ENCODE measurements at regions of chr1 and their contacts with region 1.

Region 1: GRCh38 chr1:225772323-225772768 is 5.3 kb upstream of the SRP9 start:
- DNase-seq: peak; percentile 79
- H3K4me3 ChIP-seq: peak overlapping the region in 1 of 2 experiments; percentile 39; a peak in 1 of 4 replicates
- H3K27ac ChIP-seq: peak overlapping the region; percentile 56 to 78
- H3K4me1 ChIP-seq: peaks cover 24 to 48% of the 10 kb centered on the region in 2 experiments
- H3K27me3 ChIP-seq: no peaks in the 10 kb centered on the region
- CTCF ChIP-seq: peak; percentile 95
- EP300 ChIP-seq: no peak
- RAD21 ChIP-seq: peak; percentile 99

Region 2: DNA sequence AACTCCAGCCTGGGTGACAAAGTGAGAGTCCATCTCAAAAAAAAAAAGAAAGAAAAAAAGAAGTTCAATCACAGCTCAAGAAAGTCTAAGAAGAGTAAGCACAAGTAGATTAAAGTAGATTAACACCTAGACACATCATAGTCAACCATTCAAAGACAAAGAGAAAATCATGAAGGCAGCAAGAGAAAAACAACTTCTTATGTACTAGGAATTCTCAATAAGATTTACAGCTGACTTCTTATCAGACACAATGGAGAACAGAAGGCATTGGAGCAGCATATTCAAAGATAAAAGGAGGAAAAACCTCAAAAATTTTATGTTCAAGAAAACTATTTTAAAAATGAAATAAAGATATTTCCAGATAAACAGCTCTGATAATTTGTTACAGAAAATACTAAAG is 491.8 kb before region 1 on chr1:
- CTCF ChIA-PET with region 1: no interaction called
- POLR2A ChIA-PET with region 1: no interaction called
- DNase-seq: no peak
- H3K4me3 ChIP-seq: no peak overlapping the region
- H3K27ac ChIP-seq: no peak overlapping the region
- H3K4me1 ChIP-seq: no peaks in the 10 kb centered on the region
- H3K27me3 ChIP-seq: no peaks in the 10 kb centered on the region
- CTCF ChIP-seq: no peak
- EP300 ChIP-seq: no peak
- RAD21 ChIP-seq: no peak

Region 3: GRCh38 chr1:225467193-225468020 is 304.9 kb before region 1 on chr1:
- CTCF ChIA-PET with region 1: interaction called, 473 read pairs
- POLR2A ChIA-PET with region 1: interaction called, 3 read pairs
- DNase-seq: no peak
- H3K4me3 ChIP-seq: no peak overlapping the region
- H3K27ac ChIP-seq: no peak overlapping the region
- H3K4me1 ChIP-seq: peaks cover 0 to 12% of the 10 kb centered on the region in 2 experiments; a peak in 3 of 4 replicates
- H3K27me3 ChIP-seq: no peaks in the 10 kb centered on the region
- CTCF ChIP-seq: no peak
- EP300 ChIP-seq: no peak
- RAD21 ChIP-seq: no peak

Region 4: GRCh38 chr1:225534135-225534534 is 238.2 kb before region 1 on chr1:
- CTCF ChIA-PET with region 1: interaction called, 11 read pairs
- POLR2A ChIA-PET with region 1: no interaction called
- DNase-seq: no peak
- H3K4me3 ChIP-seq: no peak overlapping the region
- H3K27ac ChIP-seq: no peak overlapping the region
- H3K4me1 ChIP-seq: peaks cover 27 to 58% of the 10 kb centered on the region in 2 experiments; a peak in 3 of 4 replicates
- H3K27me3 ChIP-seq: no peaks in the 10 kb centered on the region
- CTCF ChIP-seq: no peak
- EP300 ChIP-seq: no peak
- RAD21 ChIP-seq: no peak

Region 5: DNA sequence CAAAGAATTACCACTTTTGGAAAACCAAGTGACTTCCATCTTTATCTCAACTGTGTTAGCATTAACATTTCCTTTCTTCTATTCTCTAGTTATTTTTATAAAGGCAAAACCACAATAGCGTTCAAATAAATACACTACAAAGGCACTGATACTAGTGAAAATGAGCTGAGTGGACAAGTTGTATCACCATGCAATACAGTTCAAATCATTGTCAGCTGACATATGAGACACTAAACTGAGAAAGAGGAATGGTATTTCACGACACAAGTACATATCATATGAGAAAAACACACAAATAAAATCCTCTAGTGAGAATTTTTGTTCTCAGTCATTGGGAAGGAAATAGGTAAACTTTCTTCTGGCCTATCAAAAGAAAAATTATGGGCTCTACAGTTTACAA is 145.6 kb before region 1 on chr1:
- CTCF ChIA-PET with region 1: interaction called, 10 read pairs
- POLR2A ChIA-PET with region 1: interaction called, 3 read pairs
- DNase-seq: no peak
- H3K4me3 ChIP-seq: no peak overlapping the region
- H3K27ac ChIP-seq: 0 out of 4 replicates have a peak overlapping the region, but pooled peaks of 1 of the 2 experiments have one; percentile 1
- H3K4me1 ChIP-seq: peaks cover 7 to 29% of the 10 kb centered on the region in 2 experiments
- H3K27me3 ChIP-seq: no peaks in the 10 kb centered on the region
- CTCF ChIP-seq: no peak
- EP300 ChIP-seq: no peak
- RAD21 ChIP-seq: no peak

Region 6: GRCh38 chr1:225735252-225736149 is 36.8 kb before region 1 on chr1:
- CTCF ChIA-PET with region 1: interaction called, 13 read pairs
- POLR2A ChIA-PET with region 1: no interaction called
- DNase-seq: peak; percentile 53
- H3K4me3 ChIP-seq: no peak overlapping the region
- H3K27ac ChIP-seq: peak overlapping the region; percentile 88 to 93
- H3K4me1 ChIP-seq: peaks cover 29% of the 10 kb centered on the region in 2 experiments
- H3K27me3 ChIP-seq: no peaks in the 10 kb centered on the region
- CTCF ChIP-seq: peak; percentile 31; the same call in 1 of the 2 replicates
- EP300 ChIP-seq: 0 out of 4 replicates have a peak, but pooled peaks have one; percentile 3 to 24
- RAD21 ChIP-seq: no peak; the same call in 1 of the 2 replicates

Region 7: DNA sequence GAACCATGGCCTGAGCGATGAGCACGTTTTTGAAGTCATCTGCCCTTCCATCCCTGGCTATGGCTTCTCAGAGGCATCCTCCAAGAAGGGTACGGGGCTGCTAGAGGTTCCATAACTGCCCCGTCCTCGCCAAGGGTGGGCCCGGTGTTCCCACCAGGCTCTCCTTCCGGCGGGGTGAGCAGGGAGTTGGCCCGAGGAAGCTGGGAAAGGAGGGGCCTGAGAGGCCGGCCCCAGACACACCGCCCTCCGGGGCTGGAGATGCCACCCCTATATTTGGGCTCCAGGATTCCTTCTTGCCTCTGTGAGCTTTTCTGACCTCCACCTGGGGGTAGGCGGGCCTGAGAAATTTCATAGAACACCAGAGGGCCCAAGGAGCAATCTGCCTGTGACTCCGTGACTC is 66.4 kb after region 1 on chr1:
- CTCF ChIA-PET with region 1: no interaction called
- POLR2A ChIA-PET with region 1: no interaction called
- DNase-seq: no peak
- H3K4me3 ChIP-seq: no peak overlapping the region
- H3K27ac ChIP-seq: no peak overlapping the region
- H3K4me1 ChIP-seq: no peaks in the 10 kb centered on the region; a peak in 1 of 4 replicates
- H3K27me3 ChIP-seq: no peaks in the 10 kb centered on the region
- CTCF ChIP-seq: no peak
- EP300 ChIP-seq: no peak
- RAD21 ChIP-seq: no peak

Region 8: DNA sequence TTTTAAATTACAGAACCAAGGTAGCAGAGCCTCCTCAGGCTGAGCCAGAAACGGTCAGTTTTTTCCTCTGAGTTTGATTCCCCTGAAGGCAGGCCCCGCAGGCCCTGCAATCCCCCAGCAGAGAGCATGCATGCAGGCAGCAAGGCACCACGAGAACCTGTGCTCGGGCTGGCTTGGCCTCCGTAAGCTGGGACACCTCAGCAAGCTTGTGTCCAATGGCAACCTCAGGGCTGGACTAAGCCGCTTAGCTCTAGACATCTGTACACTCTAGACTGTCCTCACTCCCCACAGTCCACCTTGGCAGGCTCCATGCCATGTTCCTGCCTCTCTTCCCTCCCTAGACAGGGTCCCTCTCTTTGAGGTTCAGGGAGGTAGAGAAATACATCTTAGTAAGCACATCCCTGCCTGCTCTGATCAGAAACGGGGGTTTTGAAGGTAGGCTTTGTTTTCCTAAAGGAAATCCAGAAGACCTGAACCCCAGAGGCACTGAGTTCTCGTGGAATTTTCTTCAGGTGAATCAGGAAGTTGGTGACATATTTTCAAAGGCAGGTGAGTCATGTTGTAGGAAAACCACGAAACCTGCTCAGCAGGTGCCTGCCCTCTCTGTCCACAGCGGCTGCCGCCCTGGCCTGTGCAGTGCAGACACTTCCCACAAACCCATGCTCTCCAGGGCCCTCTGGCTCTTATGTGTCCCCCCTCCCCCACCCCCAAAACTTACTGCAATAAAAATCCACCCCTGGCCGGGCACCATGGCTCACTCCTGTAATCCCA is 102.9 kb after region 1 on chr1:
- CTCF ChIA-PET with region 1: no interaction called
- POLR2A ChIA-PET with region 1: no interaction called
- DNase-seq: no peak
- H3K4me3 ChIP-seq: no peak overlapping the region
- H3K27ac ChIP-seq: no peak overlapping the region
- H3K4me1 ChIP-seq: peaks cover 0 to 19% of the 10 kb centered on the region in 2 experiments; a peak in 1 of 4 replicates
- H3K27me3 ChIP-seq: no peaks in the 10 kb centered on the region
- CTCF ChIP-seq: no peak
- EP300 ChIP-seq: no peak
- RAD21 ChIP-seq: no peak

Region 9: DNA sequence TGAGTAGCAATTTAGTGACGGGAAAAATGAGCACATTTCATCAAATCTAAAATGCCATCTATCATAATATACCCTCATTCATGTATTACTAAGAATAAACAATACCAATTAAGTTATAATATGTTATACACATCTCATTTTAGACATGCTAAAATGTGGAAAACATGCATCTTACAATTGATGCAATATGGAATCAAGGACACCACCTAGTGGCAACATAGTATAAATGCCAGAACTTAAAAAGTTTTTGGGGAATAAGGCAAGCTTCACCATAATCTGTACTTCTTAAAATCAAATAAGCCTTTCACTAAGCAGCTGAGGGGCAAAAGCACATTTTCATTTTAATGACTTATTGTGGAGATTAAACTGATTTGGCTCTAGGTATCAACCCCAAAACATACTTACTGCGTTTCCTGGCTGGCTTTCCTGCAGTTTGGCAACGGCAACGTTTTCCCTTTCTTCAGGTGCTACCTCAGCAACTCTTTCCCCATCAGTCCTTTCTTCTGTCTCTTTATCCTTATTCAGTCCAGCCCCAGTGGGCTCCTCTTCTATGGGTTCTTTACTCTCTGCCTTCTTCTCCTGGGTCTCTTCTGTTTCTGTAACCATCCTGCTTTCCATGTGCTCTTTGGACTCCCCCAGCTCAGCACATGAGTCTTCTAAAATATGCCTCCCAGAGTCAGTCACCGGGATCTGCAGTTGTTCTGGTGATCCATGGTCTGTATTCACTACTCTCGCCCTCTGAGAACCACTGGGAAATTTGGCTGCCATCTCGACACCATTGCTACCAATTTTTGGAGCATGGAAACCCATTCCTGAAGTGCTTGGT is 215.4 kb after region 1 on chr1:
- CTCF ChIA-PET with region 1: interaction called, 22 read pairs
- POLR2A ChIA-PET with region 1: no interaction called
- DNase-seq: peak; percentile 45
- H3K4me3 ChIP-seq: no peak overlapping the region
- H3K27ac ChIP-seq: no peak overlapping the region
- H3K4me1 ChIP-seq: no peaks in the 10 kb centered on the region
- H3K27me3 ChIP-seq: no peaks in the 10 kb centered on the region
- CTCF ChIP-seq: peak; percentile 87
- EP300 ChIP-seq: no peak
- RAD21 ChIP-seq: peak; percentile 67

Measured in SK-N-SH (cell line).